Activated CD8-positive, alpha-beta T cell treated with anti-CD3 and anti-CD28 coated beads for 36 hours (primary cell): ENCODE measurements at regions of chr9 and their contacts with region 1.

Region 1: DNA sequence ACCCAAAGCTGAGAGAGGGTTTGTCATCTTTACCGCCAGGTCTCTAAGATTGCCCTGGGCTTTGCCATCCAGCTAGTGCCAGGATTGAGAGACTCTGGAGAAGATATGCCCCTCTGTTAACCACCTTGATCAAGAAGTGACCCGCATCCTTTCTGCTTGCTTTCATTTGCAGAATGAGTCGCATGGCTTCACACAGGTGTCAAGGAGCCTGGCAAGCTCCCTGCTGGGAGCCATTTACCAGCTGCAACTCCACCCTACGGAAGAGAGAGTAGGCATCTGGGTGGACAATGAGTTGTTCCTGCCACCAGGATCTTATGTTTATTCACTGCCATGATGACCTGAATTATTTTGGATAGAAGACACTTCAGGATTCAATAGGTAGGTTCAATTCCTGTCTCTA is 43.0 kb downstream of the HSD17B3 start:
- DNase-seq: no peak
- ATAC-seq: no peak
- H3K4me3 Mint-ChIP-seq: no peak overlapping the region
- H3K27ac Mint-ChIP-seq: no peak overlapping the region
- H3K4me1 Mint-ChIP-seq: peaks cover 8% of the 10 kb centered on the region
- H3K27me3 Mint-ChIP-seq: peaks cover 14% of the 10 kb centered on the region
- CTCF ChIP-seq: no peak

Region 2: DNA sequence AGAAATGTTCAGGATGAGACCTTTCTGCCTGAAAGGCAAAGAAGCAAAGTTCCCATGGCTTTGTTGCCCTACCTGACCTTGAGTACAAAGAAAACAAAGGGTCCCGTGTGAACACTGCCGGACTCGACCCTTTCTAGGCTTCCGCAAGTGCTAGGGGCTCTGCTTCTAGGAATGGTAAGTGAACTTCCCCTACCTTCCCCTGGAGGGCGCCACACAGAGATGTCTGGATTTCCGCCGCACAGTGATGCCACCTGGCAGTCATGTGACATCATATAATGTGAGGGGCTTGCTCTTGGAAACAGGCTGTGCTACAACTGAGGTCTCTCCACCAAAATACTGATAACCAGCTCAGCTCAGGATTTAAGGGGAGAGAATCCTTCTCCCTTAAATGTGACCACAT is 13.6 kb before region 1 on chr9:
- CTCF ChIA-PET with region 1: interaction called, 10 read pairs
- POLR2A ChIA-PET with region 1: interaction called, 4 read pairs
- intact Hi-C with region 1: no loop called
- DNase-seq: peak; percentile 22
- ATAC-seq: no peak
- H3K4me3 Mint-ChIP-seq: no peak overlapping the region
- H3K27ac Mint-ChIP-seq: no peak overlapping the region
- H3K4me1 Mint-ChIP-seq: peaks cover 14% of the 10 kb centered on the region
- H3K27me3 Mint-ChIP-seq: peaks cover 46% of the 10 kb centered on the region
- CTCF ChIP-seq: no peak

Region 3: DNA sequence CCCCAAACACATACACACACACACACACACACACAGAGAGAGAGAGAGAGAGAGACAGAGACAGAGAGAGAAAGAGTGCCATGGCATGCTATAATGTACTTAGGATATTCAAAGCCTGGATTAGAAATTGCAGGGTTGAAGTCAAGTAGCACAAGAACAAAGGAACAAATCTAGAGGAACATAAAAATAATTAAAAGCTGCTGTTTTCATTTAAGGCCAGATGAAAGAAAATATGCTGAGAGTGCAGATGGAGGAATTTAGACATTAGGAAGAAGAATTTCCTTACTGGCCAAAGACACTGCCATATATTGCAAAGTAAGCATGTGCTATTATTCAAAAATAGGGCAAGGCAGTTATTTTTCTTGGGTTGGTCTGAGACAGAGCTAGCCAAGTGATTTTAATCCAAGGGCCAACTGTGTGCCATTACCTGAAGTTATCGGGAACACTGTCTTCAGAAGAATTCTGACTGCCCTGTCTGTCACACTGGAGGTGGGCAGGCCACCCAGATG is 11.3 kb after region 1 on chr9:
- CTCF ChIA-PET with region 1: no interaction called
- POLR2A ChIA-PET with region 1: no interaction called
- intact Hi-C with region 1: no loop called
- DNase-seq: no peak
- ATAC-seq: no peak
- H3K4me3 Mint-ChIP-seq: no peak overlapping the region
- H3K27ac Mint-ChIP-seq: no peak overlapping the region
- H3K4me1 Mint-ChIP-seq: no peaks in the 10 kb centered on the region
- H3K27me3 Mint-ChIP-seq: peaks cover 1% of the 10 kb centered on the region
- CTCF ChIP-seq: no peak

Region 4: DNA sequence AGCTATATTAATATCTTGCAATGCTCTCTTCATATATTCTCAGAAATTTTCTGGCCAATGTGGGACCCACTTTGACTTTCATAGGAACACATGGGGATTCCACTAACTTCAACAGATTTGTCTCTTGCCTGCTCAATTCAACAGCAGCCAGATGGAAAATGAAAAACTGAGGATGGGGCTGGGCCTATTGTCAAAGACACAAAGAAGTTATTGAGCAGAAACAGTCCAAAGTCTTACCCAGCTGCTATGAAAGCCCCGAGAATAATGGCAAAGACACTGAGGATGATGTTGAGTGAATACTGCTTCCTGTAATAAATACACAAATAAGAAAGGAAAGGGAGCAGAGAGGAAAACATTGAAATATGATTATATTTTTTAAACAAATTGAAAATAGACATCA is 91.9 kb after region 1 on chr9:
- CTCF ChIA-PET with region 1: no interaction called
- POLR2A ChIA-PET with region 1: no interaction called
- intact Hi-C with region 1: no loop called
- DNase-seq: no peak
- ATAC-seq: no peak
- H3K4me3 Mint-ChIP-seq: no peak overlapping the region
- H3K27ac Mint-ChIP-seq: no peak overlapping the region
- H3K4me1 Mint-ChIP-seq: no peaks in the 10 kb centered on the region
- H3K27me3 Mint-ChIP-seq: no peaks in the 10 kb centered on the region
- CTCF ChIP-seq: no peak